AG04449 (cell line): ENCODE measurements at regions of chr2 and their contacts with region 1.

Region 1: DNA sequence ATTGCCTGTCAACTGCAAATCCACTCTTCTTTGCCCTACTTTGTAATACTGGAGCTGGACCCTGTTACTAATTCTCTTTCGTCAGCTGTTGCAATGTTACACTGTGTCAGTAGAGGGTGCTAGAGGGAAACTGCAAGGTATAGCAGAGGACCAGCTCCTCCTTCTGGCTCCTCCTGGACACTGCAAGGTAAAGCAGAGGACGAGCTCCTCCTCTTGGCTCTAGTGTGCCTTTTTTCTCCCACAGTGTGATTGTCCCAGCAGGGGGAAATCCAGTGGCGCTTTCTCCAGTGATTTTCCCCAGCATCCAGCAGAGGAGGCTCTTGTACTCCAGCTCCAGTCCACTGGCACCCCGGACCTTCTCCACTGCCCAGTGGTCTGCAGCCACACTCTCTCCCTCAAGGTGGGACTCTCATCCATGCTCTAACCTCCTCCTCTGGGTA is 95.6 kb downstream of the CAPN13 start:
- DNase-seq: peak; percentile 49
- H3K4me3 ChIP-seq: no peak overlapping the region
- CTCF ChIP-seq: peak; percentile 98

Region 2: GRCh38 chr2:29966266-29966665 is 745.4 kb before region 1 on chr2:
- CTCF ChIA-PET with region 1: no interaction called
- POLR2A ChIA-PET with region 1: no interaction called
- DNase-seq: no peak
- H3K4me3 ChIP-seq: no peak overlapping the region
- CTCF ChIP-seq: no peak

Region 3: GRCh38 chr2:30185186-30185585 is 526.5 kb before region 1 on chr2:
- CTCF ChIA-PET with region 1: interaction called, 799 read pairs
- POLR2A ChIA-PET with region 1: no interaction called
- DNase-seq: peak; percentile 17
- H3K4me3 ChIP-seq: no peak overlapping the region
- CTCF ChIP-seq: no peak

Region 4: DNA sequence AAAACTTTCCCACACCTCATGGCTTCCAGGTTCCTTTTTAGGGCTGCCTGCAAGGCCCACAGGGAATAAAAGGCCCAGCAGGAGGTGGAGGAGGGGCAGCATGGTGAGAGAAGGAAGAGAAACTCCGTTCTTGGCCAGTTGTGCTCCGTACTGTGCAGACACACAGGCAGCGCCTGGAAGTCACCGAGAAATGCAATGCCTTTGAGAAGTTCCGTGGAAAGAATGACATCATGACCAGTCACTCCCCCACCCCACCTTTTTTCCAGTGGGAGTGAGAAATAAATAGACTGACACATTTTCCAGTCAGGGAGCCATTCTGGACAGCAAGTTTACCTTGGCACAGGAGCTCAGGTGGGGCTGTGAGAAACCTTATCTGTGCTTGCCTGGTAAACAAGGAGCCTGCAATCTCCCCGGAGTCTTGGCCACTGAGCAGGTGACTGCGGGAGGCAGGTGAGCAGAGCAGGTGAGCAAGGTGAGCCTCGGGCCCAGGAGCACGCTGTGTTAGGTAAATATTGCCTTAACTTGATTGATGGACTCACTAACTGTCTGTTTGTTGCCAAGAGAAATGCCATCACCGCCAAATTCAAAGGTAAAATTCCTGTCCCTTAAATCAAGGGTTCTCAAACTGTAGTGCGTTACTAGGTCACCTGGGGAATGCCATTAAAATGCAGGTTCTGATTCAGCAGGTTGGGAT is 493.9 kb before region 1 on chr2:
- CTCF ChIA-PET with region 1: interaction called, 504 read pairs
- POLR2A ChIA-PET with region 1: no interaction called
- DNase-seq: no peak
- H3K4me3 ChIP-seq: no peak overlapping the region
- CTCF ChIP-seq: no peak

Region 5: DNA sequence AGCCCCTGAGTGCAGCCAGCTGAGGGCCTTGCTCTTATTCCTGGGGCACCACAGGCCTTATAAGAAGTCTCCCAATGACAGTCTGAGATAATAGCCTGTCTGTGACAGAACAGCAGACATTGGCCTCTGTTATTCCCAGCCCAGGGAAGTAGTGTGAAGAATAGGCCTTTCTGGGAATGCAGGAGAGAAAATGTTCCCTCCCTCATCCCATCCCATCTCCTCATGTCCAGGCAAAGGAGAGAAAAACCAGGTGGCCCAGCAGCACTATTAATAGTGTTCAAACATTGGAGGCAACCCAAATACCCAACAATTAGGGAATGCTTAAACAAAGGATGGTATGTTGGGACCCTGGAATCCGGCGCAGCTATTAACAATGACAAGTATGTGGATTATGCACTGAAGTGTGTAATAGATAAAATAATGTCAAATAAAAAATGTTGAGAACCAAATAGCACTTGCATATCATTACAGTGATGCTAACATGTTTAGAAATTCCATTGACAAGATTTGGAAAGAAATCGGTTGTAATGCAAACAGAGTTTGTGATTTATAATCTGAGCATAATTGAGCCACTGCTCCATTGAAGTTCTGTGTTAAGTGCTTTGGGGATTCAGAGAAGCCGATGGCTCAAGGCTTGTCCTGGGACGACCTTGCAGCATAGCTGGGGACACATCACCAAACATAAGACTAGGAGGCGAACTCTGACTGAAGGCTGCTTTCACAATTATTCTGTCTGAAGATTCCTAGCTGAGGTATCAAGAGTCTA is 411.0 kb before region 1 on chr2:
- CTCF ChIA-PET with region 1: interaction called, 10 read pairs
- POLR2A ChIA-PET with region 1: no interaction called
- DNase-seq: peak; percentile 97
- H3K4me3 ChIP-seq: no peak overlapping the region
- CTCF ChIP-seq: no peak

Region 6: DNA sequence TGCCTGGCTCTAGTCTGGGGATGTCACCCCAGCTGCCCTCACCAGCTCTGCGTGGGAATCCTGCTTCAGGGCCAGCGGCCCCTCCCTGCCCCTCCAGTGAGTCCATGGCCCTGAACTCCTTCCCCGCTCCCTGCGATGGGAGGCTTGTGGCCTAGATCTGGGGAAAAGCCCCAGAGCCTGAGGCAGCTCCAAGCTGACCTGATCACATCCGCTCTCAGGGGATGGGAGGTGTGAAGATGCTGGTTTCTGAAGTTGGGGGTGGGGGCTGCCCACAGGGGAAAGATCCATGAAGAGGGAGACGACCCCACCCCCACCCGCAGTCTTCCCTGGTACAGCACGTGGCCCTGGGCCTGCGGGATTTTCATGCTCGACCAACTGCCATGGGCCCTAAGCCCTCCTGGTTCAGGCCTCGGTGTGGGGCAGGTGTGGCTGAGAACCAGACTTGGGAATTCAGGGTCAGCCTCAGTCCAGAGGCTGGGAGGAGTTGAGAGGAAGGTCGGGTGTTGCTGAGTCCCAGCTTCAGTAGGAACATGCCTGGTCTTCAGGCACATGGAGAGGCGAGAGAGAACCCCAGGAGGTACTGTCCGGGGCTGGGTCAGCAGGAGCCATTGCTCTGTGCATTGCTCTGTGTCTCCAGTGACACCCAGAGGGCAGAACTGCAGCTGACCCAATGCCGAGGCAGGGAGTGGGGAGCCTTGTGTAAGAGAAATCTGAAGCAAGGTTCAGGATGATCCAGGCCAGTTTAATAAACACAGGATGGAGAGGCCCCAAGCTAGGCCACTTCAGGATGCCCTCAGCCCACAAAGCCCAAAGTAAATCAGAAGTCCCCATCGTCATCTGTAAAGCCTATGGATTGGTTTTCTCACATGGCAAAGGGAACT is 19.5 kb before region 1 on chr2:
- CTCF ChIA-PET with region 1: interaction called, 153 read pairs
- POLR2A ChIA-PET with region 1: no interaction called
- DNase-seq: no peak
- H3K4me3 ChIP-seq: no peak overlapping the region
- CTCF ChIP-seq: peak; percentile 15

Region 7: GRCh38 chr2:31333527-31334183 is 622.0 kb after region 1 on chr2:
- CTCF ChIA-PET with region 1: interaction called, 46 read pairs
- POLR2A ChIA-PET with region 1: no interaction called
- DNase-seq: no peak
- H3K4me3 ChIP-seq: no peak overlapping the region
- CTCF ChIP-seq: peak; percentile 82